Astrocyte of the cerebellum (primary cell): ENCODE measurements at regions of chr4 and their contacts with region 1.

Region 1: GRCh38 chr4:6076391-6076790 is 58.2 kb upstream of the C4orf50 start:
- DNase-seq: no peak
- H3K4me3 ChIP-seq: no peak overlapping the region
- CTCF ChIP-seq: no peak

Region 2: DNA sequence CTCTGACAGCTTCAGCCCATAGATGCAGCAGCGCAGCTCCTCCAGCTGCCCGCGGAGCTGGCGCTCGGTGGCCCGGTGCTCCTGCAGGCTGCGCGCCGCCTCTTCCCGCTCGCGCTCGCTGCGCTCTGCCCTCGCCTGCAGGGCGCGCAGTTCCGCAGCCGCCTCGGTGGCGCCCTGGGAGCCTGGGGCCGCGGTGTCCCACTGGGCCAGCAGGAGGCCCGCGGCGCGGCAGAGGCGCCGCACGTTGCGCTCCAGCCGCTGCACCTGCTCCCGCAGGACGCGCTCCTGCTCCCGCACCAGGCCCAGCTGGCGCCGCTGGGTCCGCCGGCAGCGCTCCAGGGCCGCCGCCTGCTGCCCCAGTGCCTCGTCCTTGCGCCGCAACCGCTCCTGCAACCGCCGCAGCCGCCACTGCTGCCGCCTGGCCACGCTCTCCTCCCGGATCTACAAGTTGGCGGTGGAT is 68.3 kb before region 1 on chr4:
- in situ Hi-C with region 1: loop called (anchors 5 kb)
- DNase-seq: no peak
- H3K4me3 ChIP-seq: no peak overlapping the region
- CTCF ChIP-seq: no peak

Region 3: DNA sequence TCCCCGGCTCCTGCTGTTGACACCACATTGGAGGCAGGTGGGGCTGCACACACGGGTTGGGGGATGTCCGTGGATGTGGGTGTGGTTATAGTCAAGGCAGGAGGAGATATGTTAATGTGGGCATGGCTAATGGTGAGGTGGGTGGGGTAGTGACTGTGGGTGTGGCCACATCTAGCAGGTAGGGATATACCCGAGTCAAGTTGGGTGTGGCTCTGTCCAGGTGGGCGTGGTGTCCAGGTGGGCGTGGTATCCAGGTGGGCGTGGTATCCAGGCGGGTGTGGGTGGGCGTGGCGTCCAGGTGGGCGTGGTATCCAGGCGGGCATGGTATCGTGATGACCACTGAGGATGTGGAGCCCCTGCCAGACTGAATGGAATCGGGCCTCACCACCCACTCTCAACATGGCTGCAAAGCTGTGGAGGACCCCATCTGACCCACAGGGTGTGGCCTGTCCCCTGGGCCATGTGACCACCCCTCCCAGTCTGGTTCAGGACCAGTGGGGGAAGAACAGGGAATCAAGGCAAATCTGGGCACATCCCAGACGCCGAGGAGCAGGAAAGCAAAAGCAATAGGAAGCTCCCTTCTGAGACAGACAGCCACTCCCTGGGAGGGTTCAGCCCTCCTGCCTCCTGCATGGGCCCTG is 519.6 kb after region 1 on chr4:
- in situ Hi-C with region 1: no loop called
- DNase-seq: no peak
- H3K4me3 ChIP-seq: no peak overlapping the region
- CTCF ChIP-seq: no peak